ENCODE measurements at regions of chrX and their contacts with region 1.

Region 1: DNA sequence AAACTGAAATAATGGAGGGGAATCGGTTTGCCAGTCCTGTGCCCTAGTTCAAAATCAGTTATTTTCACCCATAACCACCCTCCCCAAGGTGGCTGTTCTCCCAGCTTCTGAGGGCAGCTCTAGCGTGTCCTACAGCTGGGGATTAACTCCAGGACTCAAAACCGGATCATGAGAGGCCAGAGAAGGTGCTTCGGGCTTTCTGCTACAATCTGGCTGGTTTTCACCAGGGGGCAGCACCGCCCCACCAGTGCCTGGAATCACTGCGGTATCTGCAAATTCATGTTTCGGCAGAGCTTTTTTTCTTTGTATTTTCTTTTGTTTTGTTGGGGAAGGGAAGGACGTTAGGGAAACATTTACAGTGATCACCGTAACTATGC is 28.4 kb downstream of the PDHA1 start:
- DNase-seq: peak; percentile 58
- H3K4me3 ChIP-seq: no peak overlapping the region
- H3K27ac ChIP-seq: no peak overlapping the region
- H3K4me1 ChIP-seq: peaks cover 6% of the 10 kb centered on the region
- CTCF ChIP-seq: peak; percentile 79

Region 2: DNA sequence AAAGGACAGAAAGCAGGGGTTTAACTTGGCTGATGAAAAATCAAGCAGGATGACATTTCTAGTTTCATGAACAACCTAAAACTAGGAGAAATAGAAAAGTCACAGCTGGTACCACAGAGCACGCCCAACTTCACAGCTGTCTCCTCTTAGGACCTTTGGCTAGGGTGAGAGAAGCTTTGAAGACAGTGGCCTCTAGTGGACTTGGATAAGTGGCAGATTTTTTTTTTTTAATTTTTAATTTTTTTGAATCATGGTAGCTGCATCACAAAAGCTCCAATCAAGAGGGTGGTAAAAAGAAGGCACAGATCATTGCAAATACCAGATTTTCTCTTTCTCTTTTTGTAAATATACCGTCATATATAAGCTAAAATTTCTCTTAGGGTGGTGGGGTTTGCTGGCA is 163.3 kb after region 1 on chrX:
- CTCF ChIA-PET with region 1: no interaction called
- POLR2A ChIA-PET with region 1: no interaction called
- intact Hi-C with region 1: loop called (anchors 2 kb)
- DNase-seq: peak; percentile 26
- H3K4me3 ChIP-seq: no peak overlapping the region
- H3K27ac ChIP-seq: no peak overlapping the region
- H3K4me1 ChIP-seq: no peaks in the 10 kb centered on the region
- CTCF ChIP-seq: peak; percentile 60